Calu3 (cell line): ENCODE measurements at regions of chr3 and their contacts with region 1.

Region 1: GRCh38 chr3:134197681-134198261 is 52.9 kb downstream of the RYK start:
- DNase-seq: peak; percentile 51
- H3K4me3 Mint-ChIP-seq: no peak overlapping the region
- H3K27ac Mint-ChIP-seq: no peak overlapping the region
- H3K4me1 Mint-ChIP-seq: peaks cover 23% of the 10 kb centered on the region
- H3K27me3 Mint-ChIP-seq: no peaks in the 10 kb centered on the region
- CTCF ChIP-seq: peak; percentile 84

Region 2: DNA sequence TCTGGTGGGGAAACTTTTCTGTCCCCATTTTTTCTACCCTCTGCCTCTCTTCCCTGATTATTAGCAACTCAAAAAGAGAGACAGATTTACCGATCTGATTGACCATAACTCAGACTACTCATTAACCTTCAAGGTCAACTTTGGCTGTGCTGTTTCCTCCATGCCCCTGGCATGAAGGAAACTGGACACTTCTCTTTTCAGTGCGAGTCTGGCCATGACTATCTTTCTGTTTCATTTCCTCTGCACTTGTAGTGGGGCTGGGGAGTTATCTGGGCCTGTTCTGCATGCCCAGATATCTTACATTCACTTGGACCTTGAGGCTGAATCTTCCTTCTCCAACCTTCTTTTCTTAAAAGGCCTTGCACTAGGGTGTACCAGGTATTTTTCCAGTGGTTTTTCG is 91.2 kb before region 1 on chr3:
- CTCF ChIA-PET with region 1: no interaction called
- intact Hi-C with region 1: no loop called
- DNase-seq: no peak
- H3K4me3 Mint-ChIP-seq: no peak overlapping the region
- H3K27ac Mint-ChIP-seq: no peak overlapping the region
- H3K4me1 Mint-ChIP-seq: no peaks in the 10 kb centered on the region
- H3K27me3 Mint-ChIP-seq: no peaks in the 10 kb centered on the region
- CTCF ChIP-seq: no peak

Region 3: GRCh38 chr3:134299185-134299887 is 101.6 kb after region 1 on chr3:
- CTCF ChIA-PET with region 1: interaction called, 4 read pairs
- intact Hi-C with region 1: loop called (anchors 1 kb)
- DNase-seq: no peak
- H3K4me3 Mint-ChIP-seq: no peak overlapping the region
- H3K27ac Mint-ChIP-seq: no peak overlapping the region
- H3K4me1 Mint-ChIP-seq: no peaks in the 10 kb centered on the region
- H3K27me3 Mint-ChIP-seq: no peaks in the 10 kb centered on the region
- CTCF ChIP-seq: peak; percentile 40

Region 4: GRCh38 chr3:134485718-134486576 is 288.2 kb after region 1 on chr3 and contains the starts of genes ANAPC13 and CEP63:
- CTCF ChIA-PET with region 1: interaction called, 4 read pairs
- intact Hi-C with region 1: loop called (anchors 5 kb)
- DNase-seq: peak; percentile 98
- H3K4me3 Mint-ChIP-seq: peak within 1 kb of the TSS; percentile 74
- H3K27ac Mint-ChIP-seq: peak within 1 kb of the TSS; percentile 86
- H3K4me1 Mint-ChIP-seq: peaks cover 39% of the 10 kb centered on the region
- H3K27me3 Mint-ChIP-seq: no peaks in the 10 kb centered on the region
- CTCF ChIP-seq: no peak
- total RNA-seq, gene ANAPC13: 49.2 and 51.3 TPM in 2 replicates
- total RNA-seq, gene CEP63: 37.4 and 37.7 TPM in 2 replicates